Activated T-helper 1 cell treated with anti-CD3 and anti-CD28 coated beads, Interleukin-12 subunit alpha, Interleukin-12 subunit beta, Interleukin-2, Interleukin-4 antibody, amounts not matched to agents 30 ng/mL and 10 ng/mL and 1 ng/mL, durations not matched to agents 14 hours and 24 hours and 36 hours (primary cell): ENCODE measurements at regions of chr5 and their contacts with region 1.

Region 1: GRCh38 chr5:126757713-126758357 is 19.1 kb upstream of the LMNB1 start:
- DNase-seq: no peak
- H3K4me3 Mint-ChIP-seq: peak overlapping the region; percentile 58
- H3K27ac Mint-ChIP-seq: peak overlapping the region; percentile 88
- H3K4me1 Mint-ChIP-seq: peaks cover 50% of the 10 kb centered on the region
- H3K27me3 Mint-ChIP-seq: no peaks in the 10 kb centered on the region

Region 2: DNA sequence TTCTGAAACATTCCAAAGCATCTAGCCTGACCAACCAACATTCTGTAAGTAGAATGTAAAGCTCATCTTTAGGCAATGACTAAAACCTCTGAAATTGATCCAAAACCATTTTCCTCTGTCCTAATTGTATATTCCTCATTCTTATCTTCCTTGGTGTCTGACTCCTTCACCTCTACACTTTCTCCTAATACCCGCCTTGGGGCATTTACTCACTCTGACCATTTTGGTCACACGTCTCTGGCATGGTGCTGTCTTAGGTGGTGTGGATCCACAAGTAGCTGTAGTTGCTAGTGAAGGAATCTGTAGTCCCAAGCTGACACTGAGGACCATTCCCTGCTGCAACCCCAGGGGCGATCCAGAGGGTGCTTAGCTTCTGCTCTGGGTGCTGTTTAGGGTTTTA is 21.7 kb before region 1 on chr5:
- intact Hi-C with region 1: loop called (anchors 1 kb)
- DNase-seq: no peak
- H3K4me3 Mint-ChIP-seq: no peak overlapping the region
- H3K27ac Mint-ChIP-seq: peak overlapping the region; percentile 5
- H3K4me1 Mint-ChIP-seq: peaks cover 1% of the 10 kb centered on the region
- H3K27me3 Mint-ChIP-seq: no peaks in the 10 kb centered on the region

Region 3: DNA sequence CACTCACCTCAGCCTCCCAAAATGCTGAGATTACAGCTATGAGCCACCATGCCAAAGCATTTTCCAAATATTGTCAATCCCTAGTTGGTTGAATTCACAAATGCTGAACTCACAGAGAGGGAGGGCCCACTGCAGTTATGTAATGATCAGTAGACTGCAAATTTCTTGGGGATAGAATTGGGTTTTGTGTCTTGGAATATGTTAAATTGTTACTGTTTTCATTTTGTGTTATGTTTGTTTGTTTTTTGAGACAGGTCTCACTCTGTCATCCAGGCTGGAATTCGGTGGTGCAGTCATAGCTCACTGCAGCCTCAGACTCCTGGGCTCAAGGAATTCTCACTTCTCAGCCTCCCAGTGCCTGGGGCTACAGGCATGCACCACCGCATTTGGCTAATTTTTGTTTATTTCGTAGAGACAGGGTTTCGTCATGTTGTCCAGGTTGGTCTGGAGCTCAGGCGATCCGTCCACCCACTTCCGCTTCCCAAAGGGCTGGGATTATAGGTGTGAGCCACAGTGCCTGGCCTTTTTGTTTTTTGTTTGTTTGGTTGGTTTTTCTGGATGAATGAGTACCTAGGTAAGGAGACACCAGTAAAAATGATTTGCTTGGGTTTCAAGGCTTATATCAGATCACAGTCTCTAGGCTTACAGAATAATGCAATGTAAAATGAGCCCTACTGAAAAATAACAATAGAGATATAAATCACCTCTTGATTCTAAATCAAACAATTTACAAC is 12.4 kb before region 1 on chr5:
- intact Hi-C with region 1: loop called (anchors 1 kb)
- DNase-seq: no peak
- H3K4me3 Mint-ChIP-seq: no peak overlapping the region
- H3K27ac Mint-ChIP-seq: peak overlapping the region; percentile 40
- H3K4me1 Mint-ChIP-seq: peaks cover 60% of the 10 kb centered on the region
- H3K27me3 Mint-ChIP-seq: peaks cover 1% of the 10 kb centered on the region

Region 4: DNA sequence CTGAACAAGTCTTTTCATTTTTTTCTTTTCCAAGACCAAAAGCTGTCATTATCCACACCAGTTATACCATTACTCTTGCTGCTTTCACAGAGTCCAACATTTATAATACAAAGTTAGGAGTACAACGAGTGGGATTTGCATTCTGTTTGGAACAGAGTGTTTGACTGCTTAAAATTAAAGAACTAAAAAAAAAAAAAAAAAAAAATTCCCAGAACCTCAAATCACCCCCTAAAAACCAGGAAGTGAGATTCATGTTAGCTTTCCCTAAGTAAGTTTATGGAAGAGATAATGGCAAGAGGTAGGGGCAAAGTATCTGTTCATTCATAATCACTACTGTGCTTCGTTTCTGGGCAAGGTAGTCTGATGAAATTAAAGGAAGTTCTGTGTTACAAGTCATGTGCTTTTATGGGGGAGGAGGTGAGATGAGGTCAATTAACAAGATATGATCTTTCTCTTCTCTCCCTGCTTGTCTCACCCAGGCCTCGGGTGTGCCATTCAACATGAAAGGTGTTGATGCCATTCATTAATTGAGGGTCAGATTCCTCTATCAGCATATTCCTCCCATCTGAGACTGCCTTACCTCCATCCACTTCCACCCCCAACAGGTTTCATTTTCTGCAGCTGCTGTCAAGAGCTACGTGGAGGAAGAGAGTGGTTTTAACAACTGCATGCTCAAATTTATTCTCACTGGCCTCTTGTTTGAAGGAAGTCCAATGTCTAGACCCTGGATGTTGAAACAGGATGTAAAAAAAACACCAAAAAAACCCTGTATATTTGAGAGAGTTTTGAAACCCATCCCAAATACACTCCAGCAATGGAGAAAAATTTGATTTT is 214.4 kb after region 1 on chr5:
- intact Hi-C with region 1: no loop called
- DNase-seq: peak; percentile 31
- H3K4me3 Mint-ChIP-seq: peak overlapping the region; percentile 58
- H3K27ac Mint-ChIP-seq: peak overlapping the region; percentile 90
- H3K4me1 Mint-ChIP-seq: peaks cover 47% of the 10 kb centered on the region
- H3K27me3 Mint-ChIP-seq: no peaks in the 10 kb centered on the region